Naive thymus-derived CD4-positive, alpha-beta T cell (primary cell): ENCODE measurements at regions of chr15 and their contacts with region 1.

Region 1: DNA sequence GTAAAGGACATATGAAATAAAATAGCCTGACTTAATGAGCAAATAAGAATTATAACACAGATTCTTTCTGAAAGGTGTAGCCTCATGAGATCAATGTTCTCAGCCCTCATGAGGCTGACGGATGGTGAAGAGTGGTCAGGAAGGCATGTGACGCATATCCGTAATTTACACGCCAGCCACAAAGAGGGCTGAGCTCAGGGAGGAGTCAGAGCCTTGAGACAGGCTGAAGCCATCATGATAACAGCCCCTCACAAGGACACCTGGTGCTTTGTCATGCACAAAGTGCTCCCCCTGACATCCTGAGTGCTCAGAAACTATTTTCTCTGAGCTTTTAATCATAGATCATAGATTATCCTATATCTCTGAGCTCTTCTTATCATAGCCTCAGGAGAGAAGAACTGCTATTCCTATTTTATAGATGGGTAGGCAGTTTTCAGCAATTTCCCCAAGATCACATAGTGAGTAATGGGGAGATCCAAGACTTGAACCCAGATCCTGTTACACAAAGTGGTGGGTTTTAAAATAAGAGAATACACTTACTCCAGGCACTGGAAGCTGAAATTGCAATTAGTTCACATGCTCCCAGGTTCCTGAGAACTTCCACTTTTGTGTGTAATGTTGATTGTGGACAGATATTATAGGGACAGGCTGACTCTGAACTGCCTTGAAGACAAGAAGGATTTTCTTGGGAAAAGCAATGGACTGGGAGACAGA is 267.1 kb downstream of the RPLP1 start:
- DNase-seq: peak in 7 of 9 donors; percentile 26 to 49 (median 42)
- ATAC-seq: peak; percentile 87
- H3K4me3 ChIP-seq: no peak overlapping the region
- H3K4me3 Mint-ChIP-seq: peak overlapping the region in 9 of 10 donors; percentile 25 to 80 (median 46)
- H3K27ac ChIP-seq: no peak overlapping the region
- H3K27ac Mint-ChIP-seq: peak overlapping the region in 8 of 9 donors; percentile 14 to 96 (median 63)
- H3K4me1 ChIP-seq: peaks cover 62 to 76% of the 10 kb centered on the region in 2 donors
- H3K4me1 Mint-ChIP-seq: peaks cover 63 to 95% (median 88%) of the 10 kb centered on the region in 7 donors
- H3K27me3 ChIP-seq: no peaks in the 10 kb centered on the region
- H3K27me3 Mint-ChIP-seq: peaks cover 0 to 46% (median 0%) of the 10 kb centered on the region in 5 donors

Region 2: DNA sequence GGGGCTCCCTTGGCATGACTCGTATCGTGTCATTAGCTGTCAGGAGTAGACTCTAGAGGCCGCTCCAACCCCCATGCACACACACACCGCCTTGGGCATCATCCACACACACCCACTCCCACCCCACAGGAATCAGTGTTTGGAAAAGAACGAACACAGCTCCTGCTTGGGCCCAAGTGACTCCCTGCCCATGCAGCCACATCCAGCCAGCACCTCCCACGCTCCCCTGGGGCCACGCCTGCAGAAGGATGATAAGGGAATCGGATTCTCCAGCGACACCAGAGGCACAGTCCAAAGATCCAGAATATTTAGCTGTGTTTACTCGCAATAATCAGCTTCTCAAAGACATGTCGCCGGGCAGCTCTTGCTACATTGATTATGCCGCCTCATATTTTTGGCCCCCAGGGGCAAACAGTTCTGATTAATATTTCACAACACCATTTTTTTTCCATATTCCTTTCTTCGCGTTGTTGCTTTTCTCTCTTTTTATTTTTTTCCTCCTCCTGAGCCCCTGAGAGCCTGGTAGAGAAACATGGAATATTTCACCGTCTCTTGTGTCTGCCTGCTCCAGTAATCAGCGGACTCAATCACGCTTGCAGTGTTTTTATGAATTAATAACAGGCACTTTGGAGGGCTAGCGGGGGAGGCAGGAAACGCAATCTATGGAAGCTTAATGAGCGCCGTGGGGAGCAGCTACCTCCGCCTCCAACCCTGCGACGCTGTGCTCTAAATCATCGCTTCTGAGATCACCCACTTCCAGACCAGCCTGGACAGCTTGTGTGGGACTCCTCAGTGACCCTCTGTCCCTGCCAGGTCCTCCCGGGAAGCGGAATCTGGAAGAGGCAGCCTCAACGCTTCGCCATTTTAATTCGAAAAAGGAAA is 156.6 kb after region 1 on chr15:
- CTCF ChIA-PET with region 1: no interaction called
- POLR2A ChIA-PET with region 1: no interaction called
- intact Hi-C with region 1: no loop called
- DNase-seq: no peak
- ATAC-seq: no peak
- H3K4me3 ChIP-seq: no peak overlapping the region
- H3K4me3 Mint-ChIP-seq: no peak overlapping the region
- H3K27ac ChIP-seq: no peak overlapping the region
- H3K27ac Mint-ChIP-seq: peak overlapping the region in 1 of 9 donors; percentile 14
- H3K4me1 ChIP-seq: no peaks in the 10 kb centered on the region
- H3K4me1 Mint-ChIP-seq: no peaks in the 10 kb centered on the region
- H3K27me3 ChIP-seq: no peaks in the 10 kb centered on the region
- H3K27me3 Mint-ChIP-seq: peaks cover 0 to 6% (median 0%) of the 10 kb centered on the region in 5 donors

Region 3: DNA sequence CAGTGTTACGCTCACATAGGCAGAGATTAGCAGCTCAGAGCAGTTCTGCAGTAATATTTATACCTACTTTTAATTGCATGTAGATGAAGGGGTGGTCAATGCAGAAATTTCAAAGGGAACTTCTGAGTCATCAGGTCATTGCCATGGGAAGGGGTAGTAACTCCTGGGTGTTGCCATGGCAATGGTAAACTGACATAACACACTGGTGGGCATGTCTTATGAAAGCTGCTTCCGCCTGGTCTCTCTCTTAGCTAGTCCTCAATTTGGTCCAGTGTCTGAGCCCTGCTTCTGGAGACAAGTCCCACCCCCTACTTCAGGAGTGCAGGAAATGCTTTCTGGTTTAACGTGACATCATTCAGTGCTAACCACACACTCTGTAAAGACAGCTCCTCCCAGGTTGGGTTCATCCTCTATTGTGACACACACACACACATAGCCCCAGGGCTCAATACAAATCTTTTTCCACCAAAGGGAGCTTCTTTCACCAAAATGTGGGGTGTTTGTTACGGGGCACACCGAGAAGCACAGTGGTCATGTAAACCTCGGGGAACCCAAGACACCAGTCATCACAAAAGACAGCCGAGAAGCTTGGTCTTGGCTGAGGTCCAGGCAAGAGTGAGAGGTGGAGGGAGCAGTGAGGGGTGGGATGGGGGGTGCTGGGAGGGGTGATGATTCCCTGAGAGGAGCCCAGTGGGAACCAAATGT is 303.5 kb after region 1 on chr15:
- CTCF ChIA-PET with region 1: interaction called, 3 read pairs
- POLR2A ChIA-PET with region 1: no interaction called
- intact Hi-C with region 1: loop called in 1 of 2 experiments (anchors 5 kb)
- DNase-seq: peak in 8 of 9 donors; percentile 32 to 65 (median 46)
- ATAC-seq: peak; percentile 95
- H3K4me3 ChIP-seq: no peak overlapping the region
- H3K4me3 Mint-ChIP-seq: peak overlapping the region in 3 of 10 donors; percentile 42 to 80 (median 43)
- H3K27ac ChIP-seq: no peak overlapping the region
- H3K27ac Mint-ChIP-seq: peak overlapping the region in 6 of 9 donors; percentile 23 to 89 (median 56)
- H3K4me1 ChIP-seq: peaks cover 10 to 17% of the 10 kb centered on the region in 2 donors
- H3K4me1 Mint-ChIP-seq: peaks cover 9 to 26% (median 14%) of the 10 kb centered on the region in 7 donors
- H3K27me3 ChIP-seq: no peaks in the 10 kb centered on the region
- H3K27me3 Mint-ChIP-seq: peaks cover 0 to 26% (median 0%) of the 10 kb centered on the region in 5 donors